Activated T-helper 1 cell treated with anti-CD3 and anti-CD28 coated beads, Interleukin-12 subunit alpha, Interleukin-12 subunit beta, Interleukin-2, Interleukin-4 antibody, amounts not matched to agents 30 ng/mL and 10 ng/mL and 1 ng/mL, durations not matched to agents 14 hours and 24 hours and 36 hours (primary cell): ENCODE measurements at regions of chr11 and their contacts with region 1.

Region 1: DNA sequence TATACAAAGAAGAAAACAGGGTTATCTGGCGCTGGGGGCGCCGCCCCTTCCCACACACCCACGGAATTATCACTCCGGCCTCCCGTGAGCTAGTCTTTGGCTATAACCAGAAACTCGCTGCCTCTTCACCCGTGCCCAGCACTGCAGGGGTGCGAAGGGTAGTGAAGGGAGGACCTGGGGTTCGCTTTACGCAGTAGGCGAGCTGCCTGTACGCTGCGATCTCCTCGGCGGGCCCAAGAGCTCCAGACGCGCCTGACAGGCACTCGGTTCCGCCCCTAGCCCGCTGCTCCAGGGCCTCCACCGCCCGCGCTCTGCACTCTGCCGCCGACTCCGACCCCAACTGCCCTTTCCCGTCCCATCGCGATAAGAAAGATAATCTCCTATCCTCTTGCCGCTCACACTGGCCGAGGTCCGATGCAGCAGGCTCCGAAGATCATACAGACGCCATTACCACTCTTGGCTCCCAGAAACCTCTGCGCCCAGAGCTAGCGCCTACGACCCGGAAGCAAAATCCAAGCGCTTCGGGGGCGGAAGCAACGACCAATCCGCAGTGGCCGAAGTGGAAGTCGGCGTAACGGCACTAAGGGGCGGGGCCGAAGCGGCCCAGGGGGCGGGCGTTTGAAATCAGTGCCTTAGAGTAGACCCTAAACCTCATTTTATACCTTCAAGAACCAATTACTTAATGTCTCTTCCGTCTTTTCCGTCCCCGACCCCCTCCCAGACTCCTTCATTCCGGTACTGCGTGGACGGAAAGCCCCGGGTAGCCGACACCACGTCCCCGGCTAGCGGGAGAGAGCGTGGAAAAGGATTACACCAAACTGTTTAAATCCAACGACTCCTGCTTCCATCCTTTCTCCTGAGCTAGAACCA is at the starts of genes CWC15 and KDM4D:
- DNase-seq: peak; percentile 91
- H3K4me3 Mint-ChIP-seq: peak within 1 kb of the TSS; percentile 96
- H3K27ac Mint-ChIP-seq: peak within 1 kb of the TSS; percentile 96
- H3K4me1 Mint-ChIP-seq: peaks cover 43% of the 10 kb centered on the region
- H3K27me3 Mint-ChIP-seq: no peaks in the 10 kb centered on the region
- total RNA-seq, gene CWC15: 97.7 and 101 TPM in 2 replicates
- total RNA-seq, gene KDM4D: 1.1 TPM in 2 replicates

Region 2: DNA sequence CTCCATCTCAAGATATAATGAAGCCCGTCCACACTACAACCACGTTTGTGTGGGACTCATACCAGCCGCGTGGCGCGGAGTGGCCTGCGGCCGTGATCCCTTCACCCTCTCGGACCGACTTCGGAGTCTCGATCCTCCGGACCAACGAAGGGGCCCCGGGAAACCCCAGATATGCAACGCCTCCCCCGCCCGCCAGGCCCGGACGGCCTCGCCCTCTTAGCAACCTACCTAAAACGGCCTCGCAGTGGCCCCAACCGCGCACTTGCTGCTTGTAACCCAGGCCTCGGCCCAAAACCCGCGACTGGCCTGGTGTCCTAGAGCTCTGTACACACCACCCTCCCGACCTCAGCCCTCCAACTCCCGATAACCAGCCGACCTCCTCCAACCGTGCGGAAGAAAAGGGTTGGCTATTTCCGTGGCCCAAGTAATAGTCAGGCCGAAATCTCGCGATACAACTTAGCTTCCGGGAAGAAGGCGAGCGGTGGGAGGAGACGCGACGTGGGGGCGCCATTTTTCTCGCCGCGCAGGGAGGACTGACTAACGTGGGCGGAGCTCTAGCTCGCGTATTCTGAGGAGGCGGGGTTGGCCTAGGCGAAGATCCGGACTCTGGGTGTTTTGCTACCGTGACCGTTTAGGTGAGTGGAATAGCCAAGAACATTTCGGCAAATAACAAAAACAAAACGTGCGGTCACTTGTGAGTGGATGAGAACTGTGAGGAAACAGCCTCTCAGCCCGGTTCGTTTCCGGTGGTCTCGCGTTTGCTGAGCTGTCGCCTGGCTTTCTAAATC is 1232.0 kb before region 1 on chr11 and contains the starts of genes C11orf54 and TAF1D:
- intact Hi-C with region 1: loop called (anchors 2 kb)
- DNase-seq: peak; percentile 96
- H3K4me3 Mint-ChIP-seq: peak within 1 kb of the TSS; percentile 100
- H3K27ac Mint-ChIP-seq: peak within 1 kb of the TSS; percentile 99
- H3K4me1 Mint-ChIP-seq: peaks cover 53% of the 10 kb centered on the region
- H3K27me3 Mint-ChIP-seq: no peaks in the 10 kb centered on the region
- total RNA-seq, gene C11orf54: 19.3 and 21.6 TPM in 2 replicates
- total RNA-seq, gene TAF1D: 337 and 345 TPM in 2 replicates

Region 3: DNA sequence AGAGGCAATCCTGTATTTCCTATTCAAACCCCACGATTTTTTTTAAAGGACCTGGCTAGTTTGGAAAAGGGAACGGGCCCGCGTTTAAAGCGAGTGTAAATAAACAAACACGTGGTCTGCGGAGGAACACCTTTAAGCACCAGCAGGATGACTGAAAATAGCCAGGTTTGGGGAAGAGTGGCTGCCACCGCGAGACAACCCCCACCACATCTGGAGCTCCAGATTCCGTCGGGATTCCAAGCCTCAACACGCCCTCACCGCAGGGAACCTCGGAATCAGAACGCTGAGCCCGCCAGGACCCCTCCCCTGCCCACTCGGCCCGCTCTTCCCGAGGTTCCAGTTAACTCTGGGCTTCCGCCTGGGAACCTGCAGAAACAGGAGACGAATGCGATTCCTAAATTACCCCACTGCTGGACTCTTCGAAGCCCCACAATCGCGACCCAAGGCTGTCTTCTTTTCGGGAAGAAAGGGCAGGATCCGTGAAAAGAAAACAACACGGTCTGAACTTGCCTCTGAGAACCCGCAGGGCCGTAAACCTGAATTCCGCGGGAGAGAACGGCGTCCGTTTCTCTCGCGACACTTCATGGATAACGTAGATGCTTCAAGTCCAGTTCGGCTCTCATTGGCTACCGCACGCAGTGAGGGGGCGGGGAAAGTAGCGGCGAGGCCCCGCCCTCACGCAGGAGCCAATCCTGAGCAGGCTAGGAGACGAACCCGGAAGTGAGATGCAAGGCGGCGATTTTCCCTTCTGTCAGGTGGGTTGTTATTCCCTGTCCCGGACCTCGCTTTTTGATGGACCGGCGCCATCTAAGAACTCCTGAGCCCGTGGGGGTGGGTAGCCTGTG is 479.8 kb before region 1 on chr11 and contains the starts of genes ANKRD49 and MRE11:
- intact Hi-C with region 1: loop called (anchors 5 kb)
- DNase-seq: peak; percentile 96
- H3K4me3 Mint-ChIP-seq: peak within 1 kb of the TSS; percentile 94
- H3K27ac Mint-ChIP-seq: peak within 1 kb of the TSS; percentile 92
- H3K4me1 Mint-ChIP-seq: peaks cover 36% of the 10 kb centered on the region
- H3K27me3 Mint-ChIP-seq: no peaks in the 10 kb centered on the region
- total RNA-seq, gene ANKRD49: 20.0 and 21.2 TPM in 2 replicates
- total RNA-seq, gene MRE11: 43.8 and 45.9 TPM in 2 replicates

Region 4: DNA sequence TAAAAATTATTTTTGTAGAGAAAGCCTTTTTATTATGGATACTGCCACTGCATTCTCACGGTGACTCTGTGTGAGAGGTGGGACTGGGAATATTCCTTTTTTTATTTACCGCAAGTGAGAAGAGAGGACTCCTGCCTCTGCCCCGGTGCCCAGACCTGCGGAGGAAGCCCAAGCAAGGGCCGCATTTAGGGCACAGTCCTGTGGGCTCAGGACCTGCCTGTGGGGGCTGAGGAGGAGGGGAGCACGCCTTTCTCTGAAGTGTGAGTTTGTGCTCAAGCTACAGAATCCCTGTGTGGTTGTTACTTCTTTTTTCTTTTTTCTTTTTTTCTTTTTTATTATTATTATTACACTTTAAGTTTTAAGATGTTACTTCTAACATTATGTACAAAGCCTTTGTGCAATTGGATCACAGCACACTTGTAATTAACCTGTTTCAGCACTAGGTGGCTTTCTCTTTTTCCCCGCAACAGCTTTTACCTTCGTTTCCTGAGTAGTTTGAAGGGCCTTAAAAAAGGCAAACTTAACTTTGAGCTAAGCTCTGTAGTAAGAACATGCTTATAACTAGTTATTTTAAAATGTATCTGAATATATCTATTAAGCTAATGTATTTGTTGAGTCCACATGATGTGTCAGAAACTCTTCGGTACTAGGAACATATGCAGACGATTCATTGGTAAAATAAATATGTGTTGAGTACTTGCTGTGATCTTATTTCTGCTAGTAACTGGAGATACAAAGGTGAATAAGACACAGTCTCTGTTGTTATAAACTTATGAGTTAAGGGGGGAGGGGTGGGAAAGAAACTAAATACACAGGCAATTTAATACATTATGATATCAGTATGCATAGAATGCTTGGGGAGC is 186.8 kb before region 1 on chr11:
- intact Hi-C with region 1: loop called (anchors 1 kb)
- DNase-seq: no peak
- H3K4me3 Mint-ChIP-seq: no peak overlapping the region
- H3K27ac Mint-ChIP-seq: no peak overlapping the region
- H3K4me1 Mint-ChIP-seq: no peaks in the 10 kb centered on the region
- H3K27me3 Mint-ChIP-seq: peaks cover 4% of the 10 kb centered on the region

Region 5: GRCh38 chr11:95089620-95090542 is 116.5 kb after region 1 on chr11 and contains the start of gene ENDOD1:
- intact Hi-C with region 1: loop called (anchors 1 kb)
- DNase-seq: peak; percentile 85
- H3K4me3 Mint-ChIP-seq: peak within 1 kb of the TSS; percentile 89
- H3K27ac Mint-ChIP-seq: peak within 1 kb of the TSS; percentile 96
- H3K4me1 Mint-ChIP-seq: peaks cover 83% of the 10 kb centered on the region
- H3K27me3 Mint-ChIP-seq: no peaks in the 10 kb centered on the region
- total RNA-seq, gene ENDOD1: 33.8 and 34.3 TPM in 2 replicates

Region 6: GRCh38 chr11:95231127-95231880 is 258.0 kb after region 1 on chr11 and contains the start of gene SESN3:
- intact Hi-C with region 1: loop called (anchors 5 kb)
- DNase-seq: peak; percentile 98
- H3K4me3 Mint-ChIP-seq: peak within 1 kb of the TSS; percentile 96
- H3K27ac Mint-ChIP-seq: peak within 1 kb of the TSS; percentile 88
- H3K4me1 Mint-ChIP-seq: peaks cover 18% of the 10 kb centered on the region
- H3K27me3 Mint-ChIP-seq: peaks cover 2% of the 10 kb centered on the region
- total RNA-seq, gene SESN3: 62.0 and 68.6 TPM in 2 replicates

Region 7: DNA sequence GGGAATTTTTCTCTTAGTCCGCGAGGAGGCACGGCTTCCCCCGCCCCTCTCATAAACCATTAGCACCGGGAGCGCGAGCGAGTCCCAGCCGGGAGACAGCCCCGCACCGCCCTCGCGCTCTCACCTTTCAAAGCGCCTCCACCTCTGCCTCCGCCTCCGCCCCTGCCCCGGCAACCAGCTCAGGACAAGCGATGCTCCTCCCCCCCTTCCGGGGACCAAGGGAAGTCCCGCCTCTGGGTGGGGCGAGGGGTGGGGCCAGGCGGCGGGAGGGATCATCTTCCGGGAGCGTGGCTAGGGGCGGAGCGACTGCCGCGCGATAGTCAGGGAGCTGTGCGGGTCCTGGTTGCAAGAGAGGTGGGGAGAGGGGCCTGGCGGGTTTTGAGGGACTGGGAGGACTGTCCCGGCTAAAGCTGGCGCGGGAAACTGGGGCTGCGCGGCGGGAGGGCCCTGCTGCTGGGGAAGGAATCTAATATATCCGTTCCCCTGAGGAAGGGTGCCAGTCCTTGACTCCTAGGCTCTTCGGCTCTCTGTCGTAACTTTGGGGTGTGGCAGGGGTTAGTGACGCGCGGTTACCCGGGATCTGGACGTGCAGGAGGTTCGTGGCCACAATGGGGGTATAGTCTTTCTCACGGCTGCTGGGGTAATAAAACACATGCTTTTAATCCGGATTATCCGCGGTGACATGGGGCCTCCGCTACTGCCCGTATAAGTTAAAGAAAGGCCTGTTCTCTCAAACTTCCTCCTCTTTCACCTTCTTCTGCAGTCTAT is 1416.6 kb after region 1 on chr11 and contains the starts of genes CCDC82 and JRKL:
- intact Hi-C with region 1: loop called (anchors 1 kb)
- DNase-seq: peak; percentile 97
- H3K4me3 Mint-ChIP-seq: peak within 1 kb of the TSS; percentile 95
- H3K27ac Mint-ChIP-seq: peak within 1 kb of the TSS; percentile 85
- H3K4me1 Mint-ChIP-seq: peaks cover 64% of the 10 kb centered on the region
- H3K27me3 Mint-ChIP-seq: no peaks in the 10 kb centered on the region
- total RNA-seq, gene CCDC82: 28.5 and 29.9 TPM in 2 replicates
- total RNA-seq, gene JRKL: 9.6 and 10.2 TPM in 2 replicates